Activated CD8-positive, alpha-beta T cell treated with anti-CD3 and anti-CD28 coated beads for 36 hours (primary cell): ENCODE measurements at regions of chr9 and their contacts with region 1.

Region 1: GRCh38 chr9:89428901-89429890 is 68.7 kb downstream of the SEMA4D start:
- DNase-seq: peak; percentile 83
- ATAC-seq: peak; percentile 35
- H3K4me3 Mint-ChIP-seq: peak overlapping the region; percentile 26
- H3K27ac Mint-ChIP-seq: peak overlapping the region; percentile 98
- H3K4me1 Mint-ChIP-seq: peaks cover 91% of the 10 kb centered on the region
- H3K27me3 Mint-ChIP-seq: no peaks in the 10 kb centered on the region
- CTCF ChIP-seq: peak; percentile 71

Region 2: DNA sequence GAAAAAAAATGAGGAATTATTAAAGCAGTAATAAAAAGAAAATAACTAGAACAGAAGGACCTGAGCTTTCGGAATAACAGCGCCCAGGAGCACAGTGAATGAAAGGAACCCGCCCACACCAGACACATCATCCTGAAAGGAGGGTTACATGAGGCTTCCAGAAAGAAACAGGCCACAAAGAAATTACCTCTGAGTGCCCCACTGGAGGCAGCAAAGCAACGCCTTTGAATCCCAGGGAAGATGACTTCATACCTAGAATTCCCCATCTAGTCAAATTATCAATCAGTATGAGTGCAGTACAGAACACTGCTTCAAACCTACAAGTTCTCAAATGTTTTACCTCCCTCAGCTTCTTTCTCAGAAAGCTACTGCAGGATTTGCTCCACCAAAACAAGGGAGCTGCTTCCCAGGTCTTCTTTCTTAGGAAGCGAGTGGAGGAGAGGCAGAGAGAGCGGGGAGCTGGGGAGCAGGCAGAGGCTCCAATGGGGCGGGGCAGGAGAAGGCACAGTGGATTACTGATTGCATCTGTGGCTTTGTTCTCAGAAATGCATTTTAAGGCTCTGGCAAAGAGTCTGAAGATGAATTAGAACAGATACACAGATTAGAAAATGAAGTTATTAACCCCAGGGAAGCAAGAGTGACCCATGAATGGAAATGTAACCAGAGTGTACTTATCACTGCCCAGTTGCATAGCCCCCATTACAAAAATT is 18.4 kb before region 1 on chr9:
- CTCF ChIA-PET with region 1: interaction called, 16 read pairs
- POLR2A ChIA-PET with region 1: interaction called, 18 read pairs
- intact Hi-C with region 1: no loop called
- DNase-seq: peak; percentile 85
- ATAC-seq: peak; percentile 70
- H3K4me3 Mint-ChIP-seq: peak overlapping the region; percentile 40
- H3K27ac Mint-ChIP-seq: peak overlapping the region; percentile 95
- H3K4me1 Mint-ChIP-seq: peaks cover 95% of the 10 kb centered on the region
- H3K27me3 Mint-ChIP-seq: no peaks in the 10 kb centered on the region
- CTCF ChIP-seq: peak; percentile 20

Region 3: GRCh38 chr9:89442981-89443814 is 14.0 kb after region 1 on chr9:
- CTCF ChIA-PET with region 1: interaction called, 87 read pairs
- POLR2A ChIA-PET with region 1: interaction called, 39 read pairs
- intact Hi-C with region 1: no loop called
- DNase-seq: no peak
- ATAC-seq: no peak
- H3K4me3 Mint-ChIP-seq: no peak overlapping the region
- H3K27ac Mint-ChIP-seq: peak overlapping the region; percentile 93
- H3K4me1 Mint-ChIP-seq: peaks cover 90% of the 10 kb centered on the region
- H3K27me3 Mint-ChIP-seq: no peaks in the 10 kb centered on the region
- CTCF ChIP-seq: no peak

Region 4: GRCh38 chr9:89455356-89455824 is 26.2 kb after region 1 on chr9:
- CTCF ChIA-PET with region 1: interaction called, 12 read pairs
- POLR2A ChIA-PET with region 1: interaction called, 24 read pairs
- intact Hi-C with region 1: no loop called
- DNase-seq: peak; percentile 55
- ATAC-seq: peak; percentile 10
- H3K4me3 Mint-ChIP-seq: peak overlapping the region; percentile 62
- H3K27ac Mint-ChIP-seq: peak overlapping the region; percentile 95
- H3K4me1 Mint-ChIP-seq: peaks cover 94% of the 10 kb centered on the region
- H3K27me3 Mint-ChIP-seq: no peaks in the 10 kb centered on the region
- CTCF ChIP-seq: no peak

Region 5: DNA sequence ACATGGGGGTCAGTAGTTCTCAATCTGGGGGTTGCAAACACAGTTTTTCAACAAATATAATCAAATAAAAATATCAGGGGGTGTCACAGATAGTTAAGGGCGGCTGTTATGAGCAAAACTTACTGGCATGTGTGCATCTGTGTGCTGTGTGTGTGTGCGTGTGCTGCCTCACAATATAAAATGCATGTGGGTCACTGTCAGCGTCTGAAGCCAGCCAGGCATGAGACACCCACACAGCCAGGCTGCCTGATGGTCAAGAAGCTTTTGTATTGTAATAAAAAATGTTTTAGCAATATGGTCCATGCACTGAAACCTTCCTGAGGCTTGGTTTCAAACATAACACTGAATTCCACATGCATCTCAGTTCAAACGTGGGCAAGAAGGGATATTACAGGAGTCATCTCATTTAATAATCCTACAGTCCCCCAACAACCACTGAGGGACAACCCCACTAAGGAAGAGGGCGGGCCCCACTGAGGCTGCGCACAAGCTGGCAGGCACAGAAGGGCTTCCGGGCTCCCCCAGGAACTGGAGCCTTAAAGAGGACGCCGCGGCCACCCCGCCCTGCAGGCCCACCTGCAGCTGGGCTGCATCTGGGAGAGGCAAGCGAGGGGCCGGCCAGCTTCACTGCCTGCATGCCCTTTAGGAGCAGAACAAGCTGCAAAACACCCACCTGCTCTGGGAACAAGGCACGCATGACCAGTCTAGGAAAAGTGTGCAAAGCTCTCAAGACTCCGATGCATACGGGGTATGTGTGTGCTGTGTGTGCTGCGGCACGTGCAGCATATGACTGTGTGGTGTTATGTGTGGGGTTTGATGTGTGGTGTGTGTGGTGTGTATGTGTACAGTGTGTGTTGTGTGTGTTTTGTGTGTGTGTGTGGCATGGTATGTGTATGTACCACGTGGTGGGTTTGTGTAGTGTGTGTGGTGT is 54.7 kb after region 1 on chr9:
- CTCF ChIA-PET with region 1: interaction called, 44 read pairs
- POLR2A ChIA-PET with region 1: interaction called, 37 read pairs
- intact Hi-C with region 1: no loop called
- DNase-seq: peak; percentile 91
- ATAC-seq: peak; percentile 75
- H3K4me3 Mint-ChIP-seq: peak overlapping the region; percentile 86
- H3K27ac Mint-ChIP-seq: peak overlapping the region; percentile 93
- H3K4me1 Mint-ChIP-seq: peaks cover 86% of the 10 kb centered on the region
- H3K27me3 Mint-ChIP-seq: peaks cover 3% of the 10 kb centered on the region
- CTCF ChIP-seq: no peak

Region 6: DNA sequence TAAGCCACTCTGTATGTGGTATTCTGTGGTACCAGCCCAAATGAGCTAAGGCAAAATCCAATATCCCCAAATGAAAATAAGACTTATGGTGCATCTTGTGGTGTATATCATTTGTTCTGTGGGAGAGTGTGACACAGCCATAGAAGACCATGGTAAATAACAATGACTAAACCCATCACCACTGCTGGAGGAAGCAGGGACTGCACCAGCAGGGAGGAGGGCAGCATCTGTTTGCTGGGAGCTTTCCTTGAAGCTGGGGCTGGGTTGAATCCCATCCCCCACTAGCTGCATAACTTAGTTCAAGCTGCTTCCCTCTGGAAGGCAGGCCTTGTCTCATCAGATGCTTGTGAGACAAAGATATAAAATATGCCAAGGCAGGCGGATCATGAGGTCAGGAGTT is 189.8 kb after region 1 on chr9:
- CTCF ChIA-PET with region 1: no interaction called
- POLR2A ChIA-PET with region 1: no interaction called
- intact Hi-C with region 1: no loop called
- DNase-seq: no peak
- ATAC-seq: peak; percentile 61
- H3K4me3 Mint-ChIP-seq: no peak overlapping the region
- H3K27ac Mint-ChIP-seq: no peak overlapping the region
- H3K4me1 Mint-ChIP-seq: peaks cover 4% of the 10 kb centered on the region
- H3K27me3 Mint-ChIP-seq: no peaks in the 10 kb centered on the region
- CTCF ChIP-seq: no peak